ENCODE measurements at regions of chr1 and their contacts with region 1.

Region 1: DNA sequence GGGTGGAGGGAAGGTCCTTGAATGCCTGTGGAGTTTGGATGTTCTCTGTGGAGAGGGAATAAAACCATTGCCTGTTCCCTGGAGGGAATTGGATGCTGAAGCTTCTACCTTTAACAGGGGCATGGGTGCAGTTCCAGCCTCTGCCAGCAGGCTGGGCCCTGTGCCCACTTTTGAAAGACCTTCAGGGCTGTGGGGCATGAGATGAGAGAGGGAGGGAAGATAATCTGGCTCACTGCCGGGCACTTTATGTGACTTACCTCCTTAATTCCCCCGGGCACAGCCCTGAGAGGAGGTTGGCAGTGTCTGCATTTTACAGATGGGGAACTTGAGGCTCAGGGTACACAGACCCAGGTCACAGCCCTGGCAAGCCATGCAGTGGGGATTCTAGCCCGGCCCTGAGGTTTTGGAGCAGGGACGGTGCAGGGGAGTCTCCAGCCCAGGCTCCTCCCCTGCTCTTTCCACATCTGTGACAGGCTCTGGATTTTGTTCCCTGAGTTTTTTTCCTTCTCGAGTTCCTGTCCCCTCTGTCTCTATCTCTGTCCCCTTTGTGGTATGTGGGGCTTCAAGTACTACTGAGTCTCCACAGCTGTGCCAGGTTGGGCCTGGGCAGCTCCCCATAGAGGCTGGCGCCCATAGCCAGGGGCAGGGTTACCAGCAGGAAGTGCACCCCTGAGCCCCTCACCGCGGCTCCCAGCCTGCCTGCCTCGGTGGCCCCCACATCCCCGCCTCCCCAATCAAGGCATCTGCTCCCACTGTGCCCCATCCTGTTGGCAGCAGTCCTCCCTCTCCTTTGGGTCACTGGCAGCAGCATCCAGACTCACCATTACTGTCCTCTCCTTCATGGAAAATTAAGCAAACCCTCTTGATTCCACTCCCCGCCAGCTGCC is 14.0 kb upstream of the THEMIS2 start:
- DNase-seq: peak; percentile 90
- ATAC-seq: peak; percentile 96
- H3K4me3 Mint-ChIP-seq: no peak overlapping the region
- H3K27ac Mint-ChIP-seq: peak overlapping the region; percentile 80
- H3K4me1 Mint-ChIP-seq: peaks cover 22% of the 10 kb centered on the region
- H3K27me3 Mint-ChIP-seq: no peaks in the 10 kb centered on the region

Region 2: GRCh38 chr1:26744075-26744959 is 1114.0 kb before region 1 on chr1:
- CTCF ChIA-PET with region 1: no interaction called
- POLR2A ChIA-PET with region 1: no interaction called
- DNase-seq: peak; percentile 94
- ATAC-seq: peak; percentile 98
- H3K4me3 Mint-ChIP-seq: peak overlapping the region; percentile 71
- H3K27ac Mint-ChIP-seq: peak overlapping the region; percentile 97
- H3K4me1 Mint-ChIP-seq: peaks cover 83% of the 10 kb centered on the region
- H3K27me3 Mint-ChIP-seq: no peaks in the 10 kb centered on the region

Region 3: DNA sequence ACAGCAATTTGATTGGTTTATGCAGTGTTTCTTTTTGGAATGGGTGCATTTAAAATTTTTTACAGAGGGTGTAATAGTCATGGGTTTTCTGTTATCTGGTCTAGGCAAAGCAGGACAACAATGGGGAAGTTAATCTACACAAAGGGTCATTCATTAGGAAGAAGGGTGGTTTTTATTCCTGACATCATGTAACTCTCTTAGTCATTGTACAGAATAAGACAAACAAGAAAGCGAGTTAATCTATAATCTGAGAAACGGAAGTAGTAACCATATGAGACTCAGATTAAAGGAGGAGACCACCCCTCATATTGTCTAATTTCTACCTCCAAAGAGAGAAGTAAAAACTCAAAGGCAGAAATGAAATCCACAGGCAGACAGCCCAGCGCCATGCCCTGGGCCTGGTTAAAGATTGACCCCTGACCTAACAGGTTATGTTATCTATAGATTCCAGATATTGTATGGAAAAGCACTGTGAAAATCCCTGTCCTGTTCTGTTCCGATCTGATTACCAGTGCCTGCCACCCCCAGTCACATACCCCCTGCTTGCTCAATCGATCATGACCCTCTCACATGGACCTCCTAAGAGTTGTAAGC is 175.9 kb before region 1 on chr1:
- CTCF ChIA-PET with region 1: no interaction called
- POLR2A ChIA-PET with region 1: no interaction called
- DNase-seq: no peak
- ATAC-seq: no peak
- H3K4me3 Mint-ChIP-seq: no peak overlapping the region
- H3K27ac Mint-ChIP-seq: no peak overlapping the region
- H3K4me1 Mint-ChIP-seq: no peaks in the 10 kb centered on the region
- H3K27me3 Mint-ChIP-seq: peaks cover 7% of the 10 kb centered on the region

Region 4: GRCh38 chr1:27868932-27869718 is 10.8 kb after region 1 on chr1:
- CTCF ChIA-PET with region 1: interaction called, 10 read pairs
- POLR2A ChIA-PET with region 1: no interaction called
- DNase-seq: peak; percentile 82
- ATAC-seq: peak; percentile 63
- H3K4me3 Mint-ChIP-seq: peak overlapping the region; percentile 66
- H3K27ac Mint-ChIP-seq: peak overlapping the region; percentile 91
- H3K4me1 Mint-ChIP-seq: peaks cover 52% of the 10 kb centered on the region
- H3K27me3 Mint-ChIP-seq: no peaks in the 10 kb centered on the region

Region 5: DNA sequence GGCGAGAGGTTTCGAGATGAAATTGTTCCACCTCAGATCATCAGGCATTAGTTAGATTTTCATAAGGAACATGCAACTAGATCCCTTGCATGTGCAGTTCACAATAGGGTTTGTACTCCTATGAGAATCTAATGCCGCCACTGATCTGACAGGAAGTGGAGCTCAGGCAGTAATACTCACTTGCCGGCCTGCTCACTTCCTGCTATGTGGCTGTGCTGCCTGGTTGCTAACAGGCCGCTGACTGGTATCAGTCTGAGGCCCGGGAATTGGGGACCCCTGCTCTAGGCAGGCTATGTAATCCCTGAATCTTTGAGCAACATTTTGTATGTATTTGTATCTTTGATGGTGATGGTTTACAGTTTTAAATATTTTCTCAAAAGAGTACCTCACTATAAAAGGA is 134.0 kb after region 1 on chr1:
- CTCF ChIA-PET with region 1: interaction called, 15 read pairs
- POLR2A ChIA-PET with region 1: no interaction called
- DNase-seq: peak; percentile 70
- ATAC-seq: peak; percentile 96
- H3K4me3 Mint-ChIP-seq: no peak overlapping the region
- H3K27ac Mint-ChIP-seq: peak overlapping the region; percentile 73
- H3K4me1 Mint-ChIP-seq: peaks cover 48% of the 10 kb centered on the region
- H3K27me3 Mint-ChIP-seq: no peaks in the 10 kb centered on the region